GM12878 (cell line): ENCODE measurements at regions of chr12 and their contacts with region 1.

Region 1: DNA sequence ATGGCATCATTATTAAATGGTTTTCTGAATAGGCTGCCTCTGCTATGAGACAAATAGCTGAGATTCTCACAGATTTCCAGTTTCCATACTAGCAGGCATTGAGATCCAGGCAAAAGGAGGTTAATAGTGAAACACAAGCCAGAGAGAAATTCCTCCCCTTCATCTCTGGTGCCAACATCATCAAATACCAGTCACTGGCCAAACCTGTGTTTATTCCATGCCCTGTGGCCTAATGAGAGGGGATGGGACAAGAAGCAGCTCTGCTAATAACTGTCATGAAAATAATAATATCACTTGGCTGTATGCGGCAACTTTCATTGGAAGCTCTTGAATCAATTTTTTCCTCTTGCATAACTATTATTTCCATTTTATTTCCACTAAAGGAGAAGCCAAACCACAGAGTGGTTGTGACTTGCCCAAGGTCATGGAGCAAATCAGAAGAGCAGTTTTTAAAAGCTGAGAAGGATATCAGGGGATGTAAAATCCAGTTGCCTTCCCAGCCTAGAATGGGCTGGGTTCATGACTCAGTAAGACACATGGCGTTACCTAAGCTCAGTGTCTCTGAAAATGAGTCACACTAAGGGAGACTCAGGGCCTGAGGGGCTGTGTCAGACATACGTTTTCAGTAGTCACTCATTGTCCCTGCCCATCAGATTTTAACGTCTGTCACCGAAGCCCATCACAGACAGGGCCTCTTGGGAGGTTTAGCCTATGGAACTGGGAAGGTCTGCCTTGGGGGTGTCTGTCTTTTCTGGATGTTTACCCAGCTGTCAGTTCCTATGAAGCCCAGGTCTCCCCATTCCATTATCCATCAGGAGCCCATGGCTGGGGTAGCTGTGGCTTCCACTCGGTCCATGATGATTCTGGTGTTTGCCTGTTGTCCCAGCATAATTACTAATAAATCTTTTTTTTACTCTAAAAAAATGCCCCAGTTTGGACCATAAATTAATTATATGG is 208.8 kb upstream of the EEA1 start:
- DNase-seq: no peak
- ATAC-seq: peak; percentile 77
- H3K4me3 ChIP-seq: no peak overlapping the region
- H3K27ac ChIP-seq: peak overlapping the region; percentile 59; the same call in 1 of the 2 replicates
- H3K4me1 ChIP-seq: peaks cover 45% of the 10 kb centered on the region
- H3K27me3 ChIP-seq: no peaks in the 10 kb centered on the region
- CTCF ChIP-seq: no peak
- EP300 ChIP-seq: no peak; a peak in 1 of 4 replicates
- POLR2A ChIP-seq: no peak
- RAD21 ChIP-seq: no peak

Region 2: GRCh38 chr12:93025145-93025805 is 112.7 kb before region 1 on chr12:
- CTCF ChIA-PET with region 1: interaction called, 5 read pairs
- POLR2A ChIA-PET with region 1: no interaction called
- RAD21 ChIA-PET with region 1: interaction called, 16 read pairs
- SMC1A ChIA-PET with region 1: interaction called, 20 read pairs
- in situ Hi-C with region 1: no loop called
- intact Hi-C with region 1: loop called (anchors 2 kb)
- DNase-seq: peak; percentile 63
- ATAC-seq: peak; percentile 99
- H3K4me3 ChIP-seq: no peak overlapping the region
- H3K27ac ChIP-seq: no peak overlapping the region
- H3K4me1 ChIP-seq: no peaks in the 10 kb centered on the region
- H3K27me3 ChIP-seq: no peaks in the 10 kb centered on the region
- CTCF ChIP-seq: peak; percentile 61 to 70 (median 69); a peak in 5 of 6 replicates
- EP300 ChIP-seq: no peak
- POLR2A ChIP-seq: no peak
- RAD21 ChIP-seq: peak; percentile 91

Region 3: GRCh38 chr12:93109551-93110203 is 28.3 kb before region 1 on chr12:
- CTCF ChIA-PET with region 1: interaction called, 50 read pairs
- POLR2A ChIA-PET with region 1: interaction called, 13 read pairs
- RAD21 ChIA-PET with region 1: interaction called, 61 read pairs
- SMC1A ChIA-PET with region 1: interaction called, 90 read pairs
- in situ Hi-C with region 1: no loop called
- intact Hi-C with region 1: no loop called
- DNase-seq: no peak
- ATAC-seq: peak; percentile 95
- H3K4me3 ChIP-seq: no peak overlapping the region
- H3K27ac ChIP-seq: no peak overlapping the region
- H3K4me1 ChIP-seq: peaks cover 14% of the 10 kb centered on the region
- H3K27me3 ChIP-seq: no peaks in the 10 kb centered on the region
- CTCF ChIP-seq: no peak
- EP300 ChIP-seq: peak; percentile 58 to 77
- POLR2A ChIP-seq: no peak
- RAD21 ChIP-seq: no peak; the same call in 1 of the 2 replicates

Region 4: GRCh38 chr12:93167841-93168492 is 30.0 kb after region 1 on chr12:
- CTCF ChIA-PET with region 1: interaction called, 86 read pairs
- POLR2A ChIA-PET with region 1: interaction called, 52 read pairs
- RAD21 ChIA-PET with region 1: interaction called, 178 read pairs
- SMC1A ChIA-PET with region 1: interaction called, 221 read pairs
- in situ Hi-C with region 1: no loop called
- intact Hi-C with region 1: loop called (anchors 1 kb)
- DNase-seq: peak; percentile 95
- ATAC-seq: peak; percentile 84
- H3K4me3 ChIP-seq: peak overlapping the region; percentile 69
- H3K27ac ChIP-seq: peak overlapping the region; percentile 88
- H3K4me1 ChIP-seq: peaks cover 32% of the 10 kb centered on the region
- H3K27me3 ChIP-seq: no peaks in the 10 kb centered on the region
- CTCF ChIP-seq: no peak
- EP300 ChIP-seq: peak; percentile 78 to 87; a peak in 3 of 4 replicates
- POLR2A ChIP-seq: no peak
- RAD21 ChIP-seq: peak; percentile 23; the same call in 1 of the 2 replicates

Region 5: GRCh38 chr12:93243689-93244513 is 106.0 kb after region 1 on chr12:
- CTCF ChIA-PET with region 1: interaction called, 11 read pairs
- POLR2A ChIA-PET with region 1: interaction called, 16 read pairs
- RAD21 ChIA-PET with region 1: interaction called, 90 read pairs
- SMC1A ChIA-PET with region 1: interaction called, 96 read pairs
- in situ Hi-C with region 1: no loop called
- intact Hi-C with region 1: loop called (anchors 1 kb)
- DNase-seq: peak; percentile 75
- ATAC-seq: peak; percentile 52
- H3K4me3 ChIP-seq: peak overlapping the region; percentile 47
- H3K27ac ChIP-seq: peak overlapping the region; percentile 87
- H3K4me1 ChIP-seq: peaks cover 62% of the 10 kb centered on the region
- H3K27me3 ChIP-seq: no peaks in the 10 kb centered on the region
- CTCF ChIP-seq: no peak
- EP300 ChIP-seq: no peak
- POLR2A ChIP-seq: no peak
- RAD21 ChIP-seq: 0 out of 2 replicates have a peak, but pooled peaks have one; percentile 1

Region 6: GRCh38 chr12:93378373-93379325 is 240.7 kb after region 1 on chr12:
- CTCF ChIA-PET with region 1: interaction called, 86 read pairs
- POLR2A ChIA-PET with region 1: interaction called, 28 read pairs
- RAD21 ChIA-PET with region 1: interaction called, 133 read pairs
- SMC1A ChIA-PET with region 1: interaction called, 209 read pairs
- in situ Hi-C with region 1: no loop called
- intact Hi-C with region 1: loop called (anchors 2 kb)
- DNase-seq: no peak
- ATAC-seq: peak; percentile 51
- H3K4me3 ChIP-seq: peak overlapping the region; percentile 87
- H3K27ac ChIP-seq: peak overlapping the region; percentile 98
- H3K4me1 ChIP-seq: peaks cover 15% of the 10 kb centered on the region
- H3K27me3 ChIP-seq: no peaks in the 10 kb centered on the region
- CTCF ChIP-seq: no peak
- EP300 ChIP-seq: no peak
- POLR2A ChIP-seq: peak; percentile 56
- RAD21 ChIP-seq: no peak